Mammary epithelial cell (primary cell): ENCODE measurements at regions of chr6 and their contacts with region 1.

Region 1: DNA sequence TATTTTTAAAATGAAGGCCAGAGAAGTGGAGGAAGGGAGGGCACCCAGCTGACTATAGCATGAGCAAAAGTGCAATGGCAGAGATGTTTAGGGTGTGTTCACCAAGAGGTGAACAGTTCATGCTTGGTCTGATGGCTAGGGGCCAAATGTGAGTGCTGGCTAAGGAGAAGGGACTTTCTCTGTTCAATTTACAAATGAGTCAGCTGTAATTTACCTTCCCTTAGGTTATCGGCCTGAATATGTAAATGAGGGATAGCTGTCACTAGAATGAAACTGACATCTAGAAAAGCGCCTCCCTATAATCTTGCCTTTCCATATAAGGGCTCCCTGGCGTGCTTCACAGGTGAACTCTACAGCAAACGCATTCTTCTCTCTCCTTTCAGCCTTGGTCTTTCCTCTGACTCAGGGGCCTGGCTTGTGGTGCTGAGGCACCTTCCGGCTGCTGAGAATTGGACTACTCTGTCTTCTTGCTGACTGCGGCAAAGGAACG is 114.7 kb upstream of the BACH2 start:
- DNase-seq: peak; percentile 98
- H3K4me3 ChIP-seq: no peak overlapping the region
- H3K27ac ChIP-seq: peak overlapping the region; percentile 59
- H3K4me1 ChIP-seq: peaks cover 27% of the 10 kb centered on the region
- H3K27me3 ChIP-seq: no peaks in the 10 kb centered on the region
- CTCF ChIP-seq: no peak

Region 2: DNA sequence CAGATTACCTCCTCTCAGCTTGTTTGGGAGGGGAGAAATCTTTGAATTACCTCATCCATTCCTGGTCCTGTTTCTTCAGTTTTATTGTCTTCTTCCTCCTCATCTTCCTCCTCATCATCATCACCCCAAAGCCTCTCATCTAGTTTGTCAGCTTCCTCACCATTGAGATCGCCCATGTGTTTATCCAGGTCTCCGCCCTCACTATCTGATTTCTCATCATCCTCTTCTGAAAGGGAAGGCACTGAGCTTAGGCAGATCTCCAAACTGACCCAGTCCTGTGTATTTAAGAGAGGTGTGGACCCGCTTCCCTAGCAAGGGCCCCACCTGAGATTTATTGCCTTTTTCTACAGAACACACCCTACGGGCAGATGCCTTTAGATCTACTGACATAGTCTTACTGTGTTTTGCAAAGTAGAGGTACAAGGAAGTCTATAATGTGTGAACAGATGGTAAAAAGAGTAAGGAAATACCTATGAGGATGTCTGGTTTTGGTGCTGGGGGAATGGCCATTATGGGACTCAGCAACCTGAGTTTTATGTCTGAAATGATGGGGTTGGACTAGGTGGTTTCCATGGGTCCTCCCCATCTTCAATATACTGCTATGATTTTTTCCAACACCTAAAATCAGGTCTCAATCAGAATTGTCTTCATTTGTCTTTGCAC is 748.5 kb before region 1 on chr6:
- CTCF ChIA-PET with region 1: no interaction called
- dilution Hi-C with region 1: no loop called
- in situ Hi-C with region 1: no loop called
- intact Hi-C with region 1: no loop called
- DNase-seq: no peak
- H3K4me3 ChIP-seq: no peak overlapping the region
- H3K27ac ChIP-seq: no peak overlapping the region
- H3K4me1 ChIP-seq: no peaks in the 10 kb centered on the region
- H3K27me3 ChIP-seq: no peaks in the 10 kb centered on the region
- CTCF ChIP-seq: no peak

Region 3: GRCh38 chr6:90434094-90434493 is 22.8 kb after region 1 on chr6:
- CTCF ChIA-PET with region 1: no interaction called
- dilution Hi-C with region 1: no loop called
- in situ Hi-C with region 1: no loop called
- intact Hi-C with region 1: loop called (anchors 2 kb)
- DNase-seq: no peak
- H3K4me3 ChIP-seq: no peak overlapping the region
- H3K27ac ChIP-seq: no peak overlapping the region
- H3K4me1 ChIP-seq: peaks cover 5% of the 10 kb centered on the region
- H3K27me3 ChIP-seq: no peaks in the 10 kb centered on the region
- CTCF ChIP-seq: peak; percentile 19 to 23

Region 4: GRCh38 chr6:90444160-90444714 is 32.9 kb after region 1 on chr6:
- CTCF ChIA-PET with region 1: no interaction called
- dilution Hi-C with region 1: no loop called
- in situ Hi-C with region 1: no loop called
- intact Hi-C with region 1: no loop called
- DNase-seq: no peak
- H3K4me3 ChIP-seq: no peak overlapping the region
- H3K27ac ChIP-seq: no peak overlapping the region
- H3K4me1 ChIP-seq: no peaks in the 10 kb centered on the region
- H3K27me3 ChIP-seq: no peaks in the 10 kb centered on the region
- CTCF ChIP-seq: no peak